Activated CD4-positive, alpha-beta memory T cell treated with anti-CD3 and anti-CD28 coated beads for 36 hours (primary cell): ENCODE measurements at regions of chr19 and their contacts with region 1.

Region 1: GRCh38 chr19:2648528-2648937 is 54.0 kb downstream of the GNG7 start:
- DNase-seq: peak; percentile 82
- H3K4me3 Mint-ChIP-seq: no peak overlapping the region
- H3K27ac Mint-ChIP-seq: no peak overlapping the region
- H3K4me1 Mint-ChIP-seq: no peaks in the 10 kb centered on the region
- H3K27me3 Mint-ChIP-seq: no peaks in the 10 kb centered on the region

Region 2: DNA sequence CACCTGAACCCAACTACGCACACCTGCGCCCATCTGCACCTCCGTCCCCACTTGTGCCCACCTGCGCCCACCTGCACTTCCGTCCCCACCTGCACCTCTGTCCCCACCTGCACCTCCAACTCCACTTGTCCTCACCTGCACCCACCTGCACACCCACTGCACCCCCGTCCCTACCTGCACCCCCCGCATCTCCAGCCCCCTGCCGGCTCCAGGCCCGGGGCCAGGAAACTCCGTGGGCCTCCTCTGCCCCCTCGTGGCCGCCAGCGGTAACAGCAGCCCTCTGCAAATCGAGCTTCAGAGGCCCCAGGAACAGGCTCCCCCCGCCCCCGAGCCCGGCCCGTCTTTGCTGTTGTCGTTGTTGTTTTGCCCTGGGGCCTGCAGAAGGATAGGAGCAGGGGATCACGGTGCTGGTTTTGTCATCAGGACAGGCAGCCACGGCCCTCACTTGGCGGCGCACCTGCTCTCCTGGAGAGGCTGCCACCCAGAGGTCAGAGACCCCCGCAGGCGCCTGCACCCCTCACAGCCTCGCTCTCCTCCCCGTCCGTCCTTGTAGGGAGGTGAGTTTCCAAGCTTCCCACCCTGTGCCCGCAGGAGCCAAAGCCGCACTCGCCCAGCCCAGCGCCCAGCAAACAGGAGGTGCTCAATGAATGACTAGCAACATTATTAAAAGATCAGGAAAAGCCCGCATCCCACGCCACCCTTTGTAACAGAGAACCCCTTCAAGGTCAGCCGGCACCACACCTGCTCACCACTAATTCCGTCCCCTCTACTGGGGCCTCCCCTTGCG is 11.4 kb before region 1 on chr19:
- CTCF ChIA-PET with region 1: interaction called, 26 read pairs
- POLR2A ChIA-PET with region 1: no interaction called
- intact Hi-C with region 1: no loop called
- DNase-seq: peak; percentile 82
- H3K4me3 Mint-ChIP-seq: no peak overlapping the region
- H3K27ac Mint-ChIP-seq: no peak overlapping the region
- H3K4me1 Mint-ChIP-seq: peaks cover 5% of the 10 kb centered on the region
- H3K27me3 Mint-ChIP-seq: no peaks in the 10 kb centered on the region

Region 3: DNA sequence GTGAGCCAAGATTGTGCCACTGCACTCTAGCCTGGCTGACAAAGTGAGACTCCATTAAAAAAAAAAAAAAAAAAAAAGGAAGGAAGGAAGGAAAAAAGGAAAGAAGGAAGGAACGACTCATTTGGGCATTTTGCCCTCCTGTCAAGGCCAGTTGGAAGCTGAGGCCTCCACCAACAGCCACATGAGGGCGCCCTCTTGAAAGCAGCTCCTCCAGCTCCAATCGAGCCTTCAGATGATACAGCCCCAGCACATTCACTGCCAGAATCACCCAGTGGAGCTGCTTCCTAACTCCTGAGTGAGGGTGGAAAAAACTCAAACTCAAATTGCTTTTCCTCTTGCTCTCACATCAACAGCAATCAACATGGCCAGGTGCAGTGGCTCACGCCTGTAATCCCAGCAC is 13.1 kb after region 1 on chr19:
- CTCF ChIA-PET with region 1: interaction called, 17 read pairs
- POLR2A ChIA-PET with region 1: no interaction called
- intact Hi-C with region 1: no loop called
- DNase-seq: peak; percentile 53
- H3K4me3 Mint-ChIP-seq: no peak overlapping the region
- H3K27ac Mint-ChIP-seq: no peak overlapping the region
- H3K4me1 Mint-ChIP-seq: no peaks in the 10 kb centered on the region
- H3K27me3 Mint-ChIP-seq: no peaks in the 10 kb centered on the region

Region 4: DNA sequence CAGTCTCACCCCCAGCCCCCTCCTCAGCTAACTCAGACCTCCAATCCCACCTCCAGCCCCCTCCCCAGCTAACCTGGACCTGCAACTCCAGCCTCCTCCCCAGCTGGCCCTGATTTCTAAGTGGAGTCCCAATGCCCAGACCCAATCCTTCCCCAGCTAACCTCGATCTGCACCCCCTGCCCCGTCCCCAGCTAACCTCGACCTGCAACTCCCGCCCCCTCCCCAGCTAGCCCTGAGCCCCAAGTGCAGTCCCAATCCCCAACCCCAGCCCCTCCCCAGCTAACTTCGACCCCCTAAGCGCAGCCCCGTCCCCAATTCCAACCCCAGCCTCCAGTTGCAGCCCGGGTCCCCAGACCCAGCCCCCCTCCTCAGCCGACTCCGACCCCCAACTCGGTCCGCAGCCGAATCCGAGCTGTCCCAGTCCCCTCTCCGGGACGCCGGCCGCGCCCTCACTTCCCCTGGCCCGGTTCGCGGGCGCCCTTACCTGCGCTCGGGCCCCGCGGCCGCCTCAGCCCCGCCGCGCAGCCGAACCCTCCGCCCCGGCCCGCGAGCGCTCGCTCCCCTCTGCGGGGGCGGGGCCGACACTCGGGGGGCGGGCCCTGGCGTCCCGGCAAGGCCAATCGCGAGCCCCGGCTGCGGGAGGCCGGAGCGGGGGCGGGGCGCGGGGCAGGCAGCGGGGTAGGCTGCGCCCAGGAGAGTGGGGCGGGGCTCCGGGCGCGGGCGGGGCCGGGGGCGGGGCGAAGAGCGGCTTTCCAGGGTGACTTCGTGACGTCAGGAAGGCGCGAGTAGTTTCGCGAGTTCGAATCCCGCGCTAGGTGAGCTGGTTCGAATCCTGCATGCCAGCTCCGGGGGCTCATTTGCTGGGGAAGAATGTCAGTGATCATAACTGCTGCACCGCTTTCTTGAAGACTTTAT is 53.9 kb after region 1 on chr19 and contains the start of gene GNG7:
- CTCF ChIA-PET with region 1: interaction called, 11 read pairs
- POLR2A ChIA-PET with region 1: no interaction called
- intact Hi-C with region 1: no loop called
- DNase-seq: peak; percentile 97
- H3K4me3 Mint-ChIP-seq: peak within 1 kb of the TSS; percentile 54
- H3K27ac Mint-ChIP-seq: no peak within 1 kb of the TSS
- H3K4me1 Mint-ChIP-seq: peaks cover 20% of the 10 kb centered on the region
- H3K27me3 Mint-ChIP-seq: no peaks in the 10 kb centered on the region
- total RNA-seq, gene GNG7: 0.53 to 0.88 TPM

Region 5: DNA sequence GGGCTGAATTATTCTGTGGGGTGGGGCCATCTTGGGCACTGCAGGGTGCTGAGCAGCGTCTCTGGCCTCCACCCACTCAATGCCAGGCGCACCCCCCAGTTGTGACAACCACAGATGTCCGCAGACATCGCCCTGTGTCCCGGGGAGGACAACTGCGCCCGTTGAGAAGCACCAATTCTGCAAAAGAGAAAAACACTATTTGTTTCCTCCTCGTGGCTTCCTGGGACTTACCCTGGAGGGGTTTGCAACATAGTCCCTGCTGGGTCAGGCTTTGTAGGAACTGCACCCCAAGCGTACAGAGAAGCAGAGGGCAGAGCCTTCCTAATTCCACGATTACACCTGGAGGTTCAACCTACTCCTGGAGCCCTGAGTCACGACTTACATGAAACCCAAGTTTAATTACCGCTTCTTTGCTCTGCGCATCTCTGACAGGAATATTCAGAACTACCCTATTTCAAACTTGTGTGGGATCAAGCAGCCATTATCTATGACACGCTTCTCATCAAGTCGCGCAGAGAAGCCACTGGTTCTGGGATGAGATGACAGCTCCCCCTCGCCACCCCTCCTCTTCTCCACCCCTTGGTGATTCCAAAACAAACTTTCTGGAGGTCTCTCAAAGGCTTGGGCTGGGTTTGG is 102.4 kb after region 1 on chr19:
- CTCF ChIA-PET with region 1: interaction called, 88 read pairs
- POLR2A ChIA-PET with region 1: interaction called, 3 read pairs
- intact Hi-C with region 1: loop called (anchors 1 kb)
- DNase-seq: no peak
- H3K4me3 Mint-ChIP-seq: no peak overlapping the region
- H3K27ac Mint-ChIP-seq: no peak overlapping the region
- H3K4me1 Mint-ChIP-seq: peaks cover 5% of the 10 kb centered on the region
- H3K27me3 Mint-ChIP-seq: no peaks in the 10 kb centered on the region

Region 6: DNA sequence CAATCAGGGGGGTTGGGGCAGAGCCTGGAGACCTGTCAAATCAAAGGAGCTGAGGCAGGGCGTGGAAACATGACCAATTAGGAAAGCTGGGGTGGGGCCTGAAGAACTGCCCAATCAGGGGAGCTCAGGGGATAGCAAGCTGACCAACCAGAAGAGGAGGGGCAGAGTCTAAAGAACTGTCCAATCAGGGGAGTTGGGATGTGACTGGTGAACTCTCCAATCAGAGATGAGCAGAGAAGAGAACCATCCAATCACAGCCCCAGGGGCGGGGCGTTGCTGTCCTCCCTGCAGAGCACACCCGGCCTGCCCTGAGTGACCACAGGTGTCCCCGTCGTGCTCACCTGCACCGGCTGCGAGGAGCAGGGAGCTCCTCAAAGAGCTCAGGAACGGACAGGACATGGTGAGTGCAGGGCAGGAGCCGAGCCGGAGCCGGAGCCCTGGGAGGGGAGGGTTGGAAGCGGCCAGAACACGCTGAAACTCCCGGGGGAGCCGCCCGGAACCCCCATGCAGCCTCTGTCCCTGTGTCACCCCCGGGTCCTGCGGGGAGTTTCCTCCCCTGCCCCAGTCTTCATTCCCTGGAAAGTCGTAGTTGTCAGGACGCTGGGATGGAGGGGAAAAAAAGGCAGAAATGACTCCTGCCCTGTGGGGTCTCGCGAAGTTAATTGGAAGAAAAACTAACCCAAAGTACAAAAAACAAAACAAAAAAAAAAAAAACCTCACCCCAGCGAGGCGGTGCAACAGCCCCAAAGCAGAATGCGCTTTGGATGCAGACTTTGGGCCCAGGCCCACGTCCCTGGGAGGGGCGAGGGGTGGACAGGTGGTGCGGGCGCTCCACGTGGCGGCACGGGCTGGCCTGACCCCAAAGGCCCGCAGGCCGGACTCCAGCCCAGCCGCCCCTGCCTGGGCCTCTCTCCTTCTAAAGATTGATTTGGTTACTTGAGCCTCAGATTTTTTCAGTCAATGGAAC is 218.8 kb after region 1 on chr19 and contains the start of gene ZNF556:
- CTCF ChIA-PET with region 1: interaction called, 19 read pairs
- POLR2A ChIA-PET with region 1: no interaction called
- intact Hi-C with region 1: loop called (anchors 2 kb)
- DNase-seq: peak; percentile 30
- H3K4me3 Mint-ChIP-seq: no peak within 1 kb of the TSS
- H3K27ac Mint-ChIP-seq: no peak within 1 kb of the TSS
- H3K4me1 Mint-ChIP-seq: no peaks in the 10 kb centered on the region
- H3K27me3 Mint-ChIP-seq: peaks cover 5% of the 10 kb centered on the region
- total RNA-seq, gene ZNF556: not detected

Region 7: DNA sequence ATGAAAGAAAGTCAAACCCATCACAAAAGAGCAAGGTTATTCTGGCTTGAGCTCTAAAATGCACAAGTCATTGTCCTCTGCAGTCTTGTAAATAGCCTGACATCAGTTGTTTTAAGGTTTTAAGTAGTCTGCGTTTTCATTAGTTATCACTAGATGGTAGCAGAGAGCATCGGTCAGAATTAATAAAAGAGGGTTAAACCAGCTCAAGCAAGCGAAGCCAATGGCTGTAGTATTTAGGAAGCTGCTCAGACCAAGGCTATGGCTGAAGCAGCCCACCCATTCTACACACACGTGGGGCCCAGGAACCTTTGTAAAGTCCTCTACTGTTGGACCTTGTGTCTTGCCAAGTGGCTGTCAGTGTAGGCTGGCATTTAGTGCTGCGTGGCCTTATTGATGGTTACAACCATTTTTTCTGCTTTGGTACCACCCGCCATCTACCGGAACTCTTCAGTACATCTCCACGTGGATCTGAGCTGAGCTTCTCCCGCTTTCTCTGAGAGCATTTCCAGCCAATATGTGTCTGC is 238.9 kb after region 1 on chr19:
- CTCF ChIA-PET with region 1: interaction called, 13 read pairs
- POLR2A ChIA-PET with region 1: no interaction called
- intact Hi-C with region 1: no loop called
- DNase-seq: no peak
- H3K4me3 Mint-ChIP-seq: no peak overlapping the region
- H3K27ac Mint-ChIP-seq: no peak overlapping the region
- H3K4me1 Mint-ChIP-seq: peaks cover 9% of the 10 kb centered on the region
- H3K27me3 Mint-ChIP-seq: no peaks in the 10 kb centered on the region